GM12878 (cell line): ENCODE measurements at regions of chr18 and their contacts with region 1.

Region 1: GRCh38 chr18:23126376-23127056 is 8.8 kb upstream of the CABLES1 start:
- DNase-seq: no peak
- ATAC-seq: no peak
- H3K4me3 ChIP-seq: no peak overlapping the region
- H3K27ac ChIP-seq: no peak overlapping the region
- H3K4me1 ChIP-seq: no peaks in the 10 kb centered on the region
- H3K27me3 ChIP-seq: no peaks in the 10 kb centered on the region
- CTCF ChIP-seq: no peak
- EP300 ChIP-seq: no peak
- POLR2A ChIP-seq: no peak
- RAD21 ChIP-seq: no peak

Region 2: DNA sequence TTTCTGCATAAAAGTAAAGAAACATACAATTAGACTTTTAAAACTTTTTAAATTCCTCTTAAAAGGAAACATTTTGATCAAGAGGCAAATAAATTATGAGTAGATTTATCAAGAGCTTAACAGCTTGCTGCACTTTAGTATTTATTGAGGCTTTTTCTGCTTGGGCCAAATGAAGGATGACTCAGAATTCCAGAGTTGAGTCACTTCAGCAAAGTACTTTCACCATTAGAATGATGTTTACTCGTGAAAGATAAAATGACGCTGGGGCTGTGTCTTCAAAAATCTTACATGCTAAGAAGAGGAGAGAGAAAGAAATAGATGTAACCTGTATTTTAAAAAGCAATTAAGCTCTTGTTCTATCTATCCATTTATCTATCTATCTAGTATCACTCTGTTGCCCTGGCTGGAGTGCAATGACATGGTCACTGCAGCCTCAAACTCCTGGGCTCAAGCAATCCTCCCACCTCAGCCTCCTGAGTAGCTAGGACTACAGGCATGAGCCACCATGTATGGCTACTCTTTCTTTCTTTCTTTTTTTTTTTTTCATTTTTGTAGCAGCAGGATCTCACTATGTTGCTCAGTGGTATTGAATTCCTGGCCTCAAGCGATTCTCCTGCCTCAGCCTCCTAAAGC is 251.3 kb after region 1 on chr18:
- CTCF ChIA-PET with region 1: interaction called, 39 read pairs
- POLR2A ChIA-PET with region 1: no interaction called
- RAD21 ChIA-PET with region 1: interaction called, 31 read pairs
- SMC1A ChIA-PET with region 1: interaction called, 9 read pairs
- in situ Hi-C with region 1: no loop called
- intact Hi-C with region 1: no loop called
- DNase-seq: peak; percentile 39
- ATAC-seq: peak; percentile 88
- H3K4me3 ChIP-seq: no peak overlapping the region
- H3K27ac ChIP-seq: no peak overlapping the region
- H3K4me1 ChIP-seq: peaks cover 2% of the 10 kb centered on the region; the same call in 1 of the 2 replicates
- H3K27me3 ChIP-seq: no peaks in the 10 kb centered on the region
- CTCF ChIP-seq: no peak
- EP300 ChIP-seq: 0 out of 4 replicates have a peak, but pooled peaks of 1 of the 2 experiments have one; percentile 31
- POLR2A ChIP-seq: no peak
- RAD21 ChIP-seq: no peak

Region 3: DNA sequence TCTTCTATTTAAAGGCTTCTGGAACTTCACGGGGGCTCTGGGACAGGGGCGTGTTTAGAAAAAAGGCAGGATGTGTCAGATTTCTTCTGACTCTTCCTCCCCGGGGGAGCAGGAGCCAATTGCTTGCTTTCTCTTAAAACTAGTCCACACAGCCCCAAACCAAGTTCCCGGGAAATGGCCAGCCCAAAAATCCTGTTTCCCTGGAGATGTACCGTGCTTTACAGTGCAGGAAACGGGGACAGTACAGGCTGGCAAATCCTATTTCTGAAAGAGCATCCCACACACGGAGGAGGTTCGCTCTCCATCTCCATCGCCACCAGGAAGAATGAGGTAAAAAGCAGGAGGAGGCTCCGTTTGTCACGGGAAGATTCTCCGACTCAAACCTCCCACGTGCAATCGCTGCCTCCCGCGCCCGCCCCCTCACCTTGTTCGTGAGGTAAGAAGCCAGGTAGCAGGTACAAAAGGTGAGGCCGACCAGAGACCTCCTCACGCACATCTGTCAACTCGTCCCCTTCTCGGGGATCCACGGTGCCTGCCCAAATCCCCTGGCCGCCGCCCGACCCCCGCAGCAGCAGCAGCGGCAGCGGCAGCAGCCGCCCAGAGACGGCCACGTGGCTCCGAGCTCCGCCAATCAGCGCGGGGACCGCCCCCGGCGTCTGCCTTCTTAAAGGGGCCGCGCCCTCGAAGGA is 311.0 kb after region 1 on chr18:
- CTCF ChIA-PET with region 1: no interaction called
- POLR2A ChIA-PET with region 1: no interaction called
- RAD21 ChIA-PET with region 1: no interaction called
- SMC1A ChIA-PET with region 1: no interaction called
- in situ Hi-C with region 1: no loop called
- intact Hi-C with region 1: no loop called
- DNase-seq: no peak
- ATAC-seq: peak; percentile 100
- H3K4me3 ChIP-seq: peak overlapping the region; percentile 95
- H3K27ac ChIP-seq: peak overlapping the region; percentile 49
- H3K4me1 ChIP-seq: no peaks in the 10 kb centered on the region; the same call in 1 of the 2 replicates
- H3K27me3 ChIP-seq: no peaks in the 10 kb centered on the region
- CTCF ChIP-seq: no peak
- EP300 ChIP-seq: no peak
- POLR2A ChIP-seq: peak; percentile 80
- RAD21 ChIP-seq: no peak